Naive thymus-derived CD8-positive, alpha-beta T cell (primary cell): ENCODE measurements at regions of chr16 and their contacts with region 1.

Region 1: DNA sequence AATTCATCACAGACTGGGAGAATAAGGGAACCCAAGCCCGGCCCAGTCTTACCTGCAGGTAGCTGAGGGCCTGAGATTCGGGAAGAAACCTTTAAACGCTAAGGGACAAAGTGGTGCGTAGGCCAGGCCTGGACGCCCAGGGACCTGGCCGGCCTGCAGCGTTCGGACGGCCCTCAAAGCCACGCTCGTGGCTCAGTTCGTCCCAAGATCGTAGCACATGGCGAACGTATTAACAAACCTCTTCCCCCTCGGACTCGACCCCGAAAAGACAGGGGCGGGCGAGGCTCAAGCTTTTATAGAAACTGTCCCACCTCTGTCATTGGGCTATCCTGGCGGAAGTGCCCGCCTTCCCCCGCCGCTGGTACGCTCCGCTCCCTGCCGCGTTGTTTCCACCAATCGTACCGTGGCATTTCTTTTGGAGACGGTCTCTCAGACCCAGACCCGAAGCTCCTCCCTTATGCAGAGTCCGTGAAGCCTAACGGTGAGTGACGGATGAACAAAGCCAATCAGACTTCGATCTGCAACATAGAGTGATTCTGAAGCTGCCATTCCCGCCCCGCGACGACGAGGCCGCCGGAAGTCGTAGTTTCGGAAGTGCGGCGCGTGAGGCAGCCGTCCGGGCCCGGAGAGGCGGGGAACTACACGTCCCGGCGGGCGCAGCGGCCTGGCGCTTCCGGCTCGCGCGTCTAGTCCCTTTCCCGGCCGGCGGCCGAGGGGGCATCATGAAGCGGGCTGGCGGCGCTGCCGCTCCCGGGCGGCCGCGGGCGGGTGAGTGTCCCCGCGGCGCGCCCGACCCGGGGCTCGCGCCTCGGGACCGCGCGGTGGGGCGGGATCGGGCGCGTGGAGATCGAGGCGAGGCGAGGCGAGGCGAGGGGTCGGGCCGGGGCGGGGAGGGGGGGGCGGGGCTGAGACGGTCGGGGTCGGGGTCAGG is at the start of gene TRAF7:
- DNase-seq: peak; percentile 93 to 99 (median 98)
- ATAC-seq: peak; percentile 91 to 93
- H3K4me3 Mint-ChIP-seq: peak within 1 kb of the TSS; percentile 87 to 96 (median 94)
- H3K27ac Mint-ChIP-seq: peak within 1 kb of the TSS; percentile 67 to 98 (median 93)
- H3K4me1 Mint-ChIP-seq: peaks cover 22 to 71% (median 67%) of the 10 kb centered on the region in 4 donors
- H3K27me3 Mint-ChIP-seq: no peaks in the 10 kb centered on the region
- polyA plus RNA-seq, gene TRAF7: 3.5 to 8.8 (median 4.3) TPM

Region 2: GRCh38 chr16:1959269-1960049 is 195.9 kb before region 1 on chr16 and contains the start of gene NDUFB10:
- POLR2A ChIA-PET with region 1: interaction called, 48 read pairs
- DNase-seq: peak; percentile 80 to 93 (median 90)
- ATAC-seq: peak; percentile 86 to 87
- H3K4me3 Mint-ChIP-seq: peak within 1 kb of the TSS; percentile 88 to 94 (median 91)
- H3K27ac Mint-ChIP-seq: peak within 1 kb of the TSS; percentile 75 to 96 (median 90)
- H3K4me1 Mint-ChIP-seq: peaks cover 20 to 48% (median 41%) of the 10 kb centered on the region in 4 donors
- H3K27me3 Mint-ChIP-seq: peaks cover 0 to 2% (median 0%) of the 10 kb centered on the region in 5 donors
- polyA plus RNA-seq, gene NDUFB10: 180 to 217 (median 187) TPM

Region 3: DNA sequence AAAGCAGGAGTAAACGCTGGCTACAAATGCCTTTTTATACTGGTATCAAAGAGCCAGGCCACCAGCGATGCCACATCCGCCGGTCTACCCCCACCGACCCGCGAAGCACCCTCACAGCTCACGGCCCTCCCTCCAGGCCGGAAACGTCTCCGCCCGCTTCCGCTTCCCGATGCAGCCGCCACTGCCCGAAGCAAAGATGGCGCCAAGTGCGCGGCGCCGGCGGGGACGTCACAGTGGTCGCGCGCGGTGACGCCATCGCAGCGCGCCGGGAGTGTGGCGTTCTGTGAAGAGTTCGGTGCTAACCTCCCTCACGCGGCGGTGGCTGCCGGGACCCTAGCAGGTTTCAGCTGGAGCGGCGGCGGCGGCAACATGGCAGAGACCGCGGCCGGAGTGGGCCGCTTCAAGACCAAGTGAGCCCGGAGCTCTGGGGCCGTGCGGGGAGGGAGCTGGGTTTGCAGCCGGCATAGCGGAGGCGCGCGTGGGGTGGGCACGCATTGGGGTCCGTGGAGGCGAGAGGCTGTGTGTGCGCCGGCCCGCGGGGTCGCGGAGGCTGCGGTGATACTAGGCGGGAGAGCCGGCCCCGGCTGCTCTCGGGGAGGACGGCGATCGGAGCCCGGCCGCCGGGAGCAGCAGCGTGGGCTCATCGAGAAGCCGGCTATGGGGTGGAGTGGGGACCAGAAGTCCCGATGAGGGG is 183.4 kb before region 1 on chr16 and contains the start of gene TBL3:
- POLR2A ChIA-PET with region 1: interaction called, 25 read pairs
- DNase-seq: peak; percentile 93 to 98 (median 96)
- ATAC-seq: peak; percentile 96 to 98
- H3K4me3 Mint-ChIP-seq: peak within 1 kb of the TSS; percentile 89 to 100 (median 97)
- H3K27ac Mint-ChIP-seq: peak within 1 kb of the TSS; percentile 96 to 100 (median 99)
- H3K4me1 Mint-ChIP-seq: peaks cover 17 to 30% (median 23%) of the 10 kb centered on the region in 4 donors
- H3K27me3 Mint-ChIP-seq: peaks cover 0 to 5% (median 0%) of the 10 kb centered on the region in 5 donors
- polyA plus RNA-seq, gene TBL3: 44.6 to 61.8 (median 52.2) TPM

Region 4: GRCh38 chr16:2009789-2010510 is 145.4 kb before region 1 on chr16 and contains the start of gene ZNF598:
- POLR2A ChIA-PET with region 1: interaction called, 18 read pairs
- DNase-seq: peak; percentile 59 to 89 (median 78)
- ATAC-seq: peak; percentile 88 to 92
- H3K4me3 Mint-ChIP-seq: peak within 1 kb of the TSS; percentile 78 to 94 (median 91)
- H3K27ac Mint-ChIP-seq: peak within 1 kb of the TSS; percentile 75 to 98 (median 98)
- H3K4me1 Mint-ChIP-seq: peaks cover 24 to 47% (median 41%) of the 10 kb centered on the region in 4 donors
- H3K27me3 Mint-ChIP-seq: no peaks in the 10 kb centered on the region
- polyA plus RNA-seq, gene ZNF598: 3.4 to 10.0 (median 3.6) TPM

Region 5: DNA sequence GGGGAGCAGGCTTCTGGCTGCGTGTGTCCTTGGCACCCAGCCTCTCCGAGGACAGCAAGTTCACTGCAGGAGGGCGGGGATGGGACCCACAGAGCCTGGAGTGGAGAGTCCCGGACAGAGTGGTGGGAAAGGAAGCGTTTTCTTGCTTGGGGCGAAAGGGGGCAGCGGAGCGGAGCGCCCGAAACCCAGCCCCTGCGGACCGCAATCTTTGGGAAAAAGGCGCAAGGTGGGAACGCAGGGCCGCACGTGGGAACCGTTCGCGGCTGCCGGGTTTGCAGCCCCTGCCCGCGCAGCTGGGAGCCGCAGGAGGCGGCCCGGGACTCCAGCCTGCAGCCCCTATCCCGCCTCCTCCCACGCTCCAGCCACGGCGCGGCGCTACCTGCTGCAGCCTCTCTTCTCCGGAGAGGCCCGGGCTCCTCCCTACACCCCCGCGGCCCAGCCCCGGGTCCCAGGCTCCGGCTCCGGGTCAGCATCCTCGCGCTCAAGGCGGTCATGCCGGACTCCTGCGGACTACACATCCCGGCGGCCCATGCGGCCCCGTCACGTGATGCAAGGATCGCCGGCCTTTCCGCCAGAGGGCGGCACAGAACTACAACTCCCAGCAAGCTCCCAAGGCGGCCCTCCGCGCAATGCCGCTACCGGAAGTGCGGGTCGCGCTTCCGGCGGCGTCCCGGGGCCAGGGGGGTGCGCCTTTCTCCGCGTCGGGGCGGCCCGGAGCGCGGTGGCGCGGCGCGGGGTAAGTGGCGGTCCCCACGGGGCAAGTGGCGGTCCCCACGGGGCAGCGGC is 107.8 kb before region 1 on chr16 and contains the starts of genes NTHL1 and TSC2:
- POLR2A ChIA-PET with region 1: interaction called, 36 read pairs
- DNase-seq: peak; percentile 83 to 95 (median 89)
- ATAC-seq: peak; percentile 92 to 97
- H3K4me3 Mint-ChIP-seq: peak within 1 kb of the TSS; percentile 85 to 96 (median 93)
- H3K27ac Mint-ChIP-seq: peak within 1 kb of the TSS; percentile 41 to 91 (median 78)
- H3K4me1 Mint-ChIP-seq: peaks cover 9 to 30% (median 21%) of the 10 kb centered on the region in 4 donors
- H3K27me3 Mint-ChIP-seq: no peaks in the 10 kb centered on the region
- polyA plus RNA-seq, gene NTHL1: 13.1 to 20.0 (median 16.6) TPM
- polyA plus RNA-seq, gene TSC2: 23.5 to 42.0 (median 27.2) TPM

Region 6: DNA sequence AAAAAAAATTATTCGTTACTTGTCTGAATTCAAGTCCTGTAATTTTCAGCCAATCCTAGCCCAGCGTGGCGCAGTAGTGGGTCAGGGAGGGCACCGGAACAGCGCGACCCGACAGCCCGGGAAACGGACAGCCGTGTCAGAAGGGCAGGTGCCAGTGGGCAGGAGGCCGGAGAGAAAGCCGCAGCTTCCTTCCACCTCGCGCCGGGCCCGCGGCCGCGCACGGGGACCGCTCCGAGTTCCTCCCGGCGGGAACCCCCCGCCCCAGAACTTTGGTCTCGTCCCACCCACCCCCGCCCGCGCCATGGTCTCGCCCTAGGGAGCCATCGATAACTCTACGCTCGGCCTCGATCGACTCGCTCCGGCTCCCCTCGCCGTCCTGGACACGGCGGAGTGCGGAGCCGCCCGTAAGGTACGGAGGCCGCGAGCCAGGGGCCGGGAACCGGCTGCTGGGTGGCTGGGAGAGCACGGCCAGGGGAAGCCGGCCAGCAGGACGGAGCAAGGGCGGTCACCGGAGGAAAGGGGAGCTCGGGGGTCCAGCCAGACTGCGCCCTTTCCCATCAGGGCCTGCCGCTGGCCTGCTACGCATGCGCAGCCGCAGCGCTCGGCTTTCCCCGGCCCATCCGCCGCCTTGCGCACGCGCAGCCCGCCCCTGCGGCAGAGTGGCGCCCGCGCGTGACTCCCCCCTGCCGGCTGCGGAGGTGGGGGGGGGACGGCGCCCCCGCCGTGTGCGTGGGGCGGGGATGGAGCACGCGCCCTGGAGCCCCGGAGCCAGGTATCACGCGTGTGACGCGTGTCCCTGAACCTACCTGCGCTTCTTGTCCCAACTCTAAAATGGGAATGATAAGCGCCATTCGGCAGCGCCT is 50.0 kb after region 1 on chr16 and contains the start of gene MLST8:
- POLR2A ChIA-PET with region 1: interaction called, 24 read pairs
- DNase-seq: peak; percentile 86 to 99 (median 94)
- ATAC-seq: peak; percentile 84 to 86
- H3K4me3 Mint-ChIP-seq: peak within 1 kb of the TSS; percentile 75 to 90 (median 86)
- H3K27ac Mint-ChIP-seq: peak within 1 kb of the TSS; percentile 84 to 95 (median 92)
- H3K4me1 Mint-ChIP-seq: peaks cover 11 to 28% (median 25%) of the 10 kb centered on the region in 4 donors
- H3K27me3 Mint-ChIP-seq: peaks cover 0 to 1% (median 0%) of the 10 kb centered on the region in 5 donors
- polyA plus RNA-seq, gene MLST8: 29.9 to 40.4 (median 30.1) TPM

Region 7: GRCh38 chr16:2251483-2252240 is 96.3 kb after region 1 on chr16 and contains the start of gene ECI1:
- POLR2A ChIA-PET with region 1: interaction called, 20 read pairs
- DNase-seq: peak; percentile 40 to 85 (median 66)
- ATAC-seq: peak; percentile 76 to 83
- H3K4me3 Mint-ChIP-seq: peak within 1 kb of the TSS; percentile 82 to 90 (median 86)
- H3K27ac Mint-ChIP-seq: peak within 1 kb of the TSS; percentile 82 to 95 (median 92)
- H3K4me1 Mint-ChIP-seq: peaks cover 0 to 16% (median 7%) of the 10 kb centered on the region in 4 donors
- H3K27me3 Mint-ChIP-seq: peaks cover 0 to 1% (median 0%) of the 10 kb centered on the region in 5 donors
- polyA plus RNA-seq, gene ECI1: 30.6 to 40.4 (median 31.0) TPM